ENCODE measurements at regions of chr6 and their contacts with region 1.

Region 1: GRCh38 chr6:111210194-111210728 is 123.0 kb downstream of the SLC16A10 start:
- DNase-seq: no peak
- ATAC-seq: peak; percentile 69
- H3K4me3 ChIP-seq: no peak overlapping the region
- H3K27ac ChIP-seq: no peak overlapping the region
- H3K4me1 ChIP-seq: peaks cover 0 to 2% of the 10 kb centered on the region in 2 donors
- H3K27me3 ChIP-seq: no peaks in the 10 kb centered on the region

Region 2: DNA sequence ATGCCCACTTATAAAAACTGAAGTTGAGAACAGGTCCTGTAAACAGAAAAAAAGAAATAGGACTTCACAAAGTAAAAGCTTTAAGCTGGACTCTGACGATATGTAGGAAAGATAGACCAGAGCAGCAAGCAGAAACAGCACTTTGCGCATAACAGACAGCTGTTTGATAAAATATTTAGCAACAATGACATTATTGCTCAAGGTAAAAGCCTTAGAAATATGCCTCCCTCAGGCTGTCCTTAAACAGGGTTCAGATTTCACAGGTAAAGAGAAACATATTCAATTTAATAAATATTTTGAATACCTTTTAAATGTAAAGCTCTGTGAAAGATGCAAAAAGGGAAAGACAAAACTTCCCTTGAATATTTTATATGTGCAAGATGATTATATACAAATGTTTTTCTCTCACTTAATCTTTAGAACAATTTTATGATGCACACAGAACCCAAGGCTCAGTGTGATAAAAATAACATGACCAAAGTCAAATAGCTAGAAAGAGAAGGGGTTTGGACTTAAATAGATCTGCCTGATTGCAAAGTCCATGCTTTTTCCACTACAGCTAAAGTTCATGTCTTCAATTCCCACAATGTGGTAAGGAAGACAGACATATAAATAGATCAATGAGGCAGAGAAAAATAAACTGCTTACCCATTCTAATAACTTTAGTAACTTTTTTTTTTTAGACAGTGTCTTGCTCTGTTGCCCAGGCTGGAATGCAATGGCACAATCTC is 539.0 kb before region 1 on chr6:
- intact Hi-C with region 1: loop called in 1 of 2 experiments (anchors 10 kb)
- DNase-seq: no peak
- ATAC-seq: no peak
- H3K4me3 ChIP-seq: no peak overlapping the region
- H3K27ac ChIP-seq: no peak overlapping the region
- H3K4me1 ChIP-seq: no peaks in the 10 kb centered on the region
- H3K27me3 ChIP-seq: no peaks in the 10 kb centered on the region

Region 3: GRCh38 chr6:111011360-111012142 is 198.7 kb before region 1 on chr6:
- intact Hi-C with region 1: loop called (anchors 2 kb)
- DNase-seq: no peak
- ATAC-seq: no peak
- H3K4me3 ChIP-seq: no peak overlapping the region
- H3K27ac ChIP-seq: no peak overlapping the region
- H3K4me1 ChIP-seq: no peaks in the 10 kb centered on the region
- H3K27me3 ChIP-seq: no peaks in the 10 kb centered on the region

Region 4: DNA sequence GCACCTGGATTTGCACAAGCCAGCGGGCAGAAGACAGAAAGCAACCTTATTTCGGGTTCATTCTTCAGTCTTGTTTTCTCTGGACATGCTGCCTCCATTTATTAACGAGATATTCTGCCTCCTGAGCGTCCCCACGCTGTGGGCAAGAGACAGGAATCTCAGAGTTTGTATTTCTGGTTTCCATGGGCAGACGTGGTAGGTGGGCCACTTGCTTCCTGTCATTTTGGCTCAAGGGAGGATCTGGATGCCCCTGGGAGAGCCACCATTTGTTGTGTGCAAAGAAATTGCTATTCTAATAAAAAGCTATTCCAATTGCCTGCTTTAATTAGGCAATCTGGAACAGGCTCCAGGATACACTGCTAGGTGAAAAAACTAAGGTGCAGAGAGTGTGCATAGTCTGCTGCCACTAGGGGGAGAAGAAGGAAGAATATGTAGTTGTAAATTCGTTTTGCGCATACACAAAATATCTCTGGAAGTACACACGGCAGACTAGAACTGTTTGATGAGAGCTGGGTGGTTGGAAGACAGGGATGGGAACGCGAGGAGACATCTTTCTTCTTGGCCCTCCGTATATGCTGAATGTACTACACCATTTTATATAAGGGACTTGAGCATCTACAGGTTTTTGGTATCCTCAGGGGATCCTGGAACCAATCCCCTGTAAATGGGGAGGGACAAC is 153.0 kb before region 1 on chr6:
- intact Hi-C with region 1: loop called (anchors 2 kb)
- DNase-seq: no peak
- ATAC-seq: no peak
- H3K4me3 ChIP-seq: no peak overlapping the region
- H3K27ac ChIP-seq: no peak overlapping the region
- H3K4me1 ChIP-seq: no peaks in the 10 kb centered on the region
- H3K27me3 ChIP-seq: no peaks in the 10 kb centered on the region